GM12878 (cell line): ENCODE measurements at regions of chrX and their contacts with region 1.

Region 1: GRCh38 chrX:12946838-12947544 is 27.9 kb upstream of the TMSB4X start:
- DNase-seq: peak; percentile 85
- ATAC-seq: peak; percentile 9
- H3K4me3 ChIP-seq: no peak overlapping the region
- H3K27ac ChIP-seq: peak overlapping the region; percentile 97
- H3K4me1 ChIP-seq: peaks cover 41% of the 10 kb centered on the region
- H3K27me3 ChIP-seq: no peaks in the 10 kb centered on the region
- CTCF ChIP-seq: peak; percentile 97 to 100 (median 99); a peak in 5 of 6 replicates
- EP300 ChIP-seq: no peak
- POLR2A ChIP-seq: no peak
- RAD21 ChIP-seq: peak; percentile 98

Region 2: DNA sequence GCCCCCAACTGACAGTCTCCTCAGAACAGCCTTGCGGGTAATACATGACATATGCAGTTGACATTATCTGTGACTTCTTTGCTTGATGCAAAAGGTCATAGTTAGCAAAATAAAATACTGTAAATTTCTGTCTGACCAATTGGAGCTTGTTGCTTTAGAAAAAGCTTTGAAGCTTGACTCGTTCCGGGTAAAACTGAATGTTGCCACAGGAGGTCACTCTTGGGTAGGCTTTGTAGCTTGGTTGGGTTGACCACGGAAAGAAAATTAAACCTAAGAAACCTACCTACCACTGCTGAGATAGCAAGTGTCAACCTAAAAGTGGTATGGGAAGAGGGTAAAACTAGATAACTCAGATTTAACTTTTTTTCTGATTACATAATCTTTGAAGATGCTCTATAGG is 132.6 kb before region 1 on chrX:
- CTCF ChIA-PET with region 1: interaction called, 14 read pairs
- POLR2A ChIA-PET with region 1: no interaction called
- RAD21 ChIA-PET with region 1: interaction called, 11 read pairs
- SMC1A ChIA-PET with region 1: interaction called, 21 read pairs
- in situ Hi-C with region 1: no loop called
- intact Hi-C with region 1: loop called (anchors 5 kb)
- DNase-seq: peak; percentile 59
- ATAC-seq: peak; percentile 97
- H3K4me3 ChIP-seq: no peak overlapping the region
- H3K27ac ChIP-seq: no peak overlapping the region
- H3K4me1 ChIP-seq: no peaks in the 10 kb centered on the region
- H3K27me3 ChIP-seq: no peaks in the 10 kb centered on the region
- CTCF ChIP-seq: peak; percentile 66 to 86 (median 69)
- EP300 ChIP-seq: no peak
- POLR2A ChIP-seq: no peak
- RAD21 ChIP-seq: peak; percentile 98

Region 3: DNA sequence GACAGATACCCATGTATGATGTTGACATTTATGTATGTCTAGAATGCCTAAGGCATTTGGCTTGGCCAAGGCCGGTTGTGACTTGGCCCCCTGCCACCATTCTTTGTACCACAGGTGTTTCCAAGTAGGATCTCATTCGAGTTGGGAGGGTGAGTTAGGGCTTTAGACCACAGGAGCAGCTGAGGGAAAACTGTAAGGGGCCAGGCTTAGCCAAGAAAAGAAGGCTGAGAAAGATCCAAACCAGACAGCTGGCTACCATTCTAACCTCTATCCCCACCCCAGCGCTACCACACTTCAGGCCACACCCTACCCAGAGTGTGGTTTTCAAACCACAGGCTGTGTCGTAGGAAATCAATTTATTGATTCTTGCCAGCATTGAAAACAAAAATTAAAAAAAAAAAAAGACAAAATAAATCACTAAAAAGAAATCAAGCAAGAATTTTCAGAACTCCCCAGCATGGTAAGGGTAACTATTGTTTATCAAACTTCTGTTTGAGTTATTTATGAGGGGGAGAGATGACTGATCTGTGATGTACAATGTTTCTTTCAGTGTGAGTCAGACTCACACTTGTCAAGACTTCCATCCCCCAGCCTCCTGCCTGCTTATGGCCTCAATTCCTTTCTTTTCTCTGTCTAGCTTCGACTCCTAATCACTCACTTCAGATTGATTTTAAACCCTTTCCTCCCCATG is 37.8 kb after region 1 on chrX:
- CTCF ChIA-PET with region 1: interaction called, 14 read pairs
- POLR2A ChIA-PET with region 1: interaction called, 24 read pairs
- RAD21 ChIA-PET with region 1: interaction called, 186 read pairs
- SMC1A ChIA-PET with region 1: interaction called, 351 read pairs
- in situ Hi-C with region 1: no loop called
- intact Hi-C with region 1: no loop called
- DNase-seq: no peak
- ATAC-seq: peak; percentile 74
- H3K4me3 ChIP-seq: peak overlapping the region; percentile 26; the same call in 1 of the 2 replicates
- H3K27ac ChIP-seq: peak overlapping the region; percentile 98
- H3K4me1 ChIP-seq: peaks cover 68% of the 10 kb centered on the region
- H3K27me3 ChIP-seq: no peaks in the 10 kb centered on the region
- CTCF ChIP-seq: no peak
- EP300 ChIP-seq: peak; percentile 68 to 87; a peak in 3 of 4 replicates
- POLR2A ChIP-seq: no peak
- RAD21 ChIP-seq: no peak; the same call in 1 of the 2 replicates

Region 4: DNA sequence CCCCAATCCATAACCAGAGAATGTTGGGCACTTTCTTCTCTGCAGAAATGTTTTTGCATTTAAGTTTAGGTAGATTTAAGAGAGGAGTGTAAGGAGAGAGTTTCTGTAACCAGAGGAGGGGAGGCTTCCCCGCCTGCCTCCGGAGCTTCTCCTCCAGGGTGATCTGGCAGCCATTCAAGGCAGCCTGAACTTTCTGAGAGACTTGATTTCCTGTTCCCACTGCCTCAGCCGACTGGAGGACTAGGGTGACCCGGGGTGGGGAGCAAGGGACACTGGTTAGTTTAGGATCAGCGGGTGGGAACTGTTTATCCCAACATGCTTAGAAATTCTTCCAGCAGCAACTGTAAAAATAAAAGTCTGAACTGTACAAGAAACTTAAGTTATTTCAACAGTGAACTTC is 82.3 kb after region 1 on chrX:
- CTCF ChIA-PET with region 1: interaction called, 4 read pairs
- POLR2A ChIA-PET with region 1: interaction called, 3 read pairs
- RAD21 ChIA-PET with region 1: interaction called, 4 read pairs
- SMC1A ChIA-PET with region 1: interaction called, 8 read pairs
- in situ Hi-C with region 1: no loop called
- intact Hi-C with region 1: loop called (anchors 1 kb)
- DNase-seq: no peak
- ATAC-seq: peak; percentile 21
- H3K4me3 ChIP-seq: no peak overlapping the region
- H3K27ac ChIP-seq: peak overlapping the region; percentile 83
- H3K4me1 ChIP-seq: peaks cover 45% of the 10 kb centered on the region
- H3K27me3 ChIP-seq: no peaks in the 10 kb centered on the region
- CTCF ChIP-seq: no peak
- EP300 ChIP-seq: no peak
- POLR2A ChIP-seq: no peak
- RAD21 ChIP-seq: no peak

Region 5: GRCh38 chrX:13254076-13254785 is 307.2 kb after region 1 on chrX:
- CTCF ChIA-PET with region 1: interaction called, 84 read pairs
- POLR2A ChIA-PET with region 1: interaction called, 15 read pairs
- RAD21 ChIA-PET with region 1: interaction called, 137 read pairs
- SMC1A ChIA-PET with region 1: interaction called, 121 read pairs
- in situ Hi-C with region 1: loop called (anchors 5 kb)
- intact Hi-C with region 1: loop called (anchors 2 kb)
- DNase-seq: peak; percentile 56
- ATAC-seq: peak; percentile 59
- H3K4me3 ChIP-seq: no peak overlapping the region; the same call in 1 of the 2 replicates
- H3K27ac ChIP-seq: peak overlapping the region; percentile 92
- H3K4me1 ChIP-seq: peaks cover 58% of the 10 kb centered on the region
- H3K27me3 ChIP-seq: no peaks in the 10 kb centered on the region
- CTCF ChIP-seq: peak; percentile 33 to 52 (median 41); a peak in 4 of 6 replicates
- EP300 ChIP-seq: no peak
- POLR2A ChIP-seq: no peak
- RAD21 ChIP-seq: peak; percentile 75

Region 6: GRCh38 chrX:13473442-13474163 is 526.6 kb after region 1 on chrX:
- CTCF ChIA-PET with region 1: interaction called, 13 read pairs
- POLR2A ChIA-PET with region 1: no interaction called
- RAD21 ChIA-PET with region 1: interaction called, 7 read pairs
- SMC1A ChIA-PET with region 1: interaction called, 4 read pairs
- in situ Hi-C with region 1: loop called (anchors 5 kb)
- intact Hi-C with region 1: no loop called
- DNase-seq: peak; percentile 52
- ATAC-seq: peak; percentile 92
- H3K4me3 ChIP-seq: peak overlapping the region; percentile 52; the same call in 1 of the 2 replicates
- H3K27ac ChIP-seq: peak overlapping the region; percentile 88
- H3K4me1 ChIP-seq: no peaks in the 10 kb centered on the region
- H3K27me3 ChIP-seq: no peaks in the 10 kb centered on the region
- CTCF ChIP-seq: no peak
- EP300 ChIP-seq: peak; percentile 51 to 81; a peak in 3 of 4 replicates
- POLR2A ChIP-seq: no peak
- RAD21 ChIP-seq: no peak

Region 7: DNA sequence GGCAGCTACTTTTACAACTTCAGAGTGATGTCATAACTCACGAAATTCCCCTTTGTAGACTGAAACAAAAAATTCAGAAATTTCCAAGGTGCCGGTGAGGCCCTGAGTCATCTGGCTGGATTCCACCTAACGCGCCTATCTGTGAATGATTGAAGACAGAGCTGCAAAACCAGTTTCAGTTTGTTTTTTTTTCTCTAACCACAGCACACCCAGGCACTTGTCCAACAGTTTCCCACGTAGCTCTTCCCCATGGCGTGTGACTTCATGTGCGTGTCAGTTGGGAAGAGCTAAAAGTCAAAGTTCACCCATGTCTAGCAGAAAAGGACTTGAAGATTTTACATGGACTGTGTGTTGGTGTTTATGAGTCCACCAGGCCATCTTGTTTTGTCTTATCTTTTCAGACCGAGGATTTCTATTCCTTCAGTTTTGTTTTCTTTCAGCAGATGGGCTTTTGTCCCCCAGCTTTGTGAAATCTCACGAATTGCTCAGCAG is 722.3 kb after region 1 on chrX:
- CTCF ChIA-PET with region 1: no interaction called
- POLR2A ChIA-PET with region 1: no interaction called
- RAD21 ChIA-PET with region 1: no interaction called
- SMC1A ChIA-PET with region 1: no interaction called
- in situ Hi-C with region 1: loop called (anchors 25 kb)
- intact Hi-C with region 1: loop called (anchors 10 kb)
- DNase-seq: peak; percentile 89
- ATAC-seq: peak; percentile 77
- H3K4me3 ChIP-seq: peak overlapping the region; percentile 44; the same call in 1 of the 2 replicates
- H3K27ac ChIP-seq: peak overlapping the region; percentile 92
- H3K4me1 ChIP-seq: peaks cover 37% of the 10 kb centered on the region
- H3K27me3 ChIP-seq: no peaks in the 10 kb centered on the region
- CTCF ChIP-seq: no peak
- EP300 ChIP-seq: peak; percentile 91 to 92
- POLR2A ChIP-seq: no peak
- RAD21 ChIP-seq: 0 out of 2 replicates have a peak, but pooled peaks have one; percentile 15